Ovary (tissue), 10 donors: ENCODE measurements at regions of chr2 and their contacts with region 1.

Region 1: DNA sequence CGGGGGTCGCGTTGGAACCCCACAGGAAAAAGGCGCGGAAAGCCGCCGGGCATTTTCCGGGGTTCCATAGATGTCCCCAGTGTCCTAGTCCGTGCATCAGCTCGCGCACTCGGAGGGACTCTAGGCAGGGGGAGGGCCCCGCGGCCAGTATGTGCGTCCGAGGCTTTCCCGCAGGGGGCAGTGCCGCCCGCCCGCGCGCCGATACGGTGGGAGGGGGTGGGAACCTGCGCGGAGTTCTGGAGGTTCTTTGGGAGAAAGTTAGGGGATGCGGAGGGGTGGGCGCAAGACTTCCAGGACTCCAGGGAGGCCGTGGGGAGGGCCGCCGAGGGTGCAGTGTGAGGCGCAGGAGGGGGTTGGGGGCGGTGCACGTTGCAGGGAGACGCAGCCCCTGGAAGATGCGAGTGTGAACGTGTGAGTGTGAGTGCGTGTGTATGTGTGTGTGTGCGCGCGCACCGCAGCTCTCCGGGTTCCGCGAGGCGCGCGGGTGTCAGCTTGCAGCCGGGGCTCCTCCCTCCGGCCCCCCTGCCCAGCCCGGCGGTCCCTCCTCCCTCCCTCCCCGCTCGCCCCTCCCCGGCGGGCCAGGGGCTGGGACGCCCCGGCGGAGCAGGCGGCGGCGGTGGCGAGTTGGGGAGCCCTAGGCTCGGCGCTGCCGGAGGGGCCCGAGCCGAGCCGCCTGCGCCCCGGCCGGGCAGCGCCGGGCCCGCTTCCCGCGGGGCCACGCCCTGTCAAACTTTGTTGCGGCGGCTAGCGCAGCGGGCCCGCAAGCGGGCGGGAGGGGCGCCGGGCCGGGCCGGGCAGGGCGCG is at the start of gene TCF7L1:
- DNase-seq: peak; percentile 88 to 93 (median 91)
- H3K4me3 ChIP-seq: peak within 1 kb of the TSS; percentile 79
- H3K27ac ChIP-seq: peak within 1 kb of the TSS; percentile 72 to 95
- H3K4me1 ChIP-seq: peaks cover 1% of the 10 kb centered on the region
- H3K27me3 ChIP-seq: no peaks in the 10 kb centered on the region
- CTCF ChIP-seq: peak; percentile 84 to 90 (median 86)
- EP300 ChIP-seq: no peak
- POLR2A ChIP-seq: peak; percentile 22
- total RNA-seq, gene TCF7L1: 5.2 to 29.8 (median 24.1) TPM

Region 2: DNA sequence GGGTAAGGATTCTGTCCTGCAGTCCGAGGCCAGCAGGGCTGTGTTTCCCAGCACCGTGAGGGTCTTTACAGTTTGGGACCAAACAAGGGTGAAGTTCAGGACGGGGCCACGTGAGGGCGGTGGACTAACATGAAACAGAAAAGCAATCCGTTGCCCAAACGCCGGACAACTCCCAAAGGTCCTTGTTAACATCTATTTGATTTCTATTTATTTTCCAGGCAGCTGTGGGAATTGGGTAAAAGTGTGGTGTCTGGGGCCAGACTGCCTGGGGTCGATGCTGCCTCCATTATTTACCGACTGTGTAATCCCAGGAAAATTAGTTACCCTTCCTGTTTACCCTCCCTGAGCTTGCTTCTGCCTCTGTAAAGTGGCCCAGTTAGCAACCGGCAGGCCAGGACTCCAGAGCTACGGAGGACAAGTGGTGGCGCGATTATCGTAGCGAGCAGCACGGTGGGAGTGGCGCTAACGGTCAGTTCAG is 66.1 kb before region 1 on chr2:
- intact Hi-C with region 1: loop called in 1 of 4 experiments (anchors 5 kb)
- DNase-seq: peak; percentile 59 to 83 (median 78)
- H3K4me3 ChIP-seq: peak overlapping the region; percentile 15
- H3K27ac ChIP-seq: no peak overlapping the region
- H3K4me1 ChIP-seq: no peaks in the 10 kb centered on the region
- H3K27me3 ChIP-seq: no peaks in the 10 kb centered on the region
- CTCF ChIP-seq: peak; percentile 31 to 68 (median 67)
- EP300 ChIP-seq: no peak
- POLR2A ChIP-seq: no peak

Region 3: GRCh38 chr2:85282914-85283313 is 149.9 kb after region 1 on chr2:
- intact Hi-C with region 1: loop called in 3 of 4 experiments (anchors 5 kb)
- DNase-seq: no peak
- H3K4me3 ChIP-seq: no peak overlapping the region
- H3K27ac ChIP-seq: no peak overlapping the region
- H3K4me1 ChIP-seq: peaks cover 8% of the 10 kb centered on the region
- H3K27me3 ChIP-seq: no peaks in the 10 kb centered on the region
- CTCF ChIP-seq: no peak
- EP300 ChIP-seq: no peak
- POLR2A ChIP-seq: no peak

Region 4: GRCh38 chr2:85288244-85288725 is 155.2 kb after region 1 on chr2:
- intact Hi-C with region 1: loop called in 3 of 4 experiments (anchors 5 kb)
- DNase-seq: no peak
- H3K4me3 ChIP-seq: no peak overlapping the region
- H3K27ac ChIP-seq: no peak overlapping the region
- H3K4me1 ChIP-seq: peaks cover 1% of the 10 kb centered on the region
- H3K27me3 ChIP-seq: no peaks in the 10 kb centered on the region
- CTCF ChIP-seq: no peak
- EP300 ChIP-seq: no peak
- POLR2A ChIP-seq: no peak

Region 5: DNA sequence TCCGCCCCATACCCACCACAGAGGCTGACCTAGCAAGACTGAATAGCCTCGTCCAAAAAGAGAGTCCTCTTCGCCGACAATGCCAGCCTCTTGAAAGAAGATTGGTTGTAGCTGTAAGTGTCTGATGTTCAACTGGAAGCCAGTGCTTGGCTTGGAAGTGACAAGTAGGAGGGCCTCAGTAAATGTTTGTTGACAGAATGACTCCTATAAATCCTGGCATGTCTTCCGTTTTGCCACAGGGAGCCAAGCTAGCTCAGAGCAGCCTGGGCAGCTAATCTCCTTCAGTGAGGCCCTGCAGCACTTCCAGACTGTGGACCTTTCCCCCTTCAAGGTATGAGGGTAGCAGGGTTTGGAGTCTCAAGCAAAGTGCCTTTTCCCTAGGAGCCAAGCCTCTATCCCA is 236.5 kb after region 1 on chr2:
- intact Hi-C with region 1: no loop called
- DNase-seq: no peak
- H3K4me3 ChIP-seq: no peak overlapping the region
- H3K27ac ChIP-seq: no peak overlapping the region
- H3K4me1 ChIP-seq: no peaks in the 10 kb centered on the region
- H3K27me3 ChIP-seq: no peaks in the 10 kb centered on the region
- CTCF ChIP-seq: no peak
- EP300 ChIP-seq: no peak
- POLR2A ChIP-seq: no peak

Region 6: GRCh38 chr2:85551698-85552678 is 419.0 kb after region 1 on chr2:
- intact Hi-C with region 1: loop called in 1 of 4 experiments (anchors 10 kb)
- DNase-seq: peak; percentile 69 to 88 (median 82)
- H3K4me3 ChIP-seq: no peak overlapping the region
- H3K27ac ChIP-seq: no peak overlapping the region
- H3K4me1 ChIP-seq: no peaks in the 10 kb centered on the region
- H3K27me3 ChIP-seq: no peaks in the 10 kb centered on the region
- CTCF ChIP-seq: peak; percentile 65 to 95 (median 89)
- EP300 ChIP-seq: no peak
- POLR2A ChIP-seq: no peak